IMR-90 (cell line): ENCODE measurements at regions of chr2 and their contacts with region 1.

Region 1: GRCh38 chr2:80086831-80087230 is 217.7 kb downstream of the LRRTM1 start:
- DNase-seq: peak; percentile 94
- ATAC-seq: peak; percentile 97
- H3K4me3 ChIP-seq: no peak overlapping the region
- H3K27ac ChIP-seq: no peak overlapping the region
- H3K4me1 ChIP-seq: peaks cover 8% of the 10 kb centered on the region
- H3K27me3 ChIP-seq: no peaks in the 10 kb centered on the region
- CTCF ChIP-seq: peak; percentile 43
- POLR2A ChIP-seq: no peak
- RAD21 ChIP-seq: peak; percentile 56

Region 2: DNA sequence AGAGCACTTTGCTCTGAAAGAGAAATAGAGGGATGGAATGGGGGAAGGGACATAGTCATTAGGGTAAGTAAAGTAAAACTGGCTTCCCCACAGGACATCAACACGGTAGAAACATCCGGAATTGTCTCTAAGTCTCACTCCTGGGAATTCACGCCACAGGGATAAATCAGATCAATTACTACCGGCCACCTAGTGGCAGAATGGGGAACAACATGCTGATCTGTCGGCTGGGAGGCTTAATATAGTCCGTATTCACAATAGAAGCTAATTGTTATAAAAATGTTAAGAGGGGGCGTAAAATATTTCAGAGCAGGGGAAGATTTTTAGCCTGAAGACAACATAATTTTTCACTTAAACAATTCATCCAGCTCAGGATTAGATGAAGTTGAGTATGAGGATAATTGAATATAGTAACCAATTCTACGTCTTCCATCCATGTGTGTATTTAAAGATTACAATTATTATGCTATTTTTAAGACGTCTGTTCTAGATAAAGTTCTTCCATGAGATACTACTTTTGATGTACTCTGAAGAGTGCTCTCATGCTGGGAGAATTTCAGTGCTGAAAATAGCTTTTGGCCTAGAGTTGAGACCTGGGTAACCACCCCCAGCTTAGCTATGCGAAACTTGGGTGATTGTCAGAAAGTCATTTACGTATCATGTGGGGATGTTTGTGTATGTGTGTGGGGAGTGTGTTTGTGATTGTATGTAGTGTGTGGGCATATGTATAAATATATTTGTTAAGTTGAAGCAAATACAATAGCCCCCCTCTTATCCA is 152.1 kb after region 1 on chr2:
- CTCF ChIA-PET with region 1: interaction called, 7 read pairs
- POLR2A ChIA-PET with region 1: no interaction called
- dilution Hi-C with region 1: no loop called
- in situ Hi-C with region 1: no loop called
- intact Hi-C with region 1: loop called (anchors 5 kb)
- DNase-seq: peak; percentile 42
- ATAC-seq: peak; percentile 85
- H3K4me3 ChIP-seq: no peak overlapping the region
- H3K27ac ChIP-seq: no peak overlapping the region
- H3K4me1 ChIP-seq: no peaks in the 10 kb centered on the region
- H3K27me3 ChIP-seq: peaks cover 2% of the 10 kb centered on the region
- CTCF ChIP-seq: peak; percentile 77
- POLR2A ChIP-seq: no peak
- RAD21 ChIP-seq: peak; percentile 70